HCT116 (cell line): ENCODE measurements at regions of chr7 and their contacts with region 1.

Region 1: GRCh38 chr7:44587843-44588711 is 6.0 kb upstream of the TMED4 start:
- DNase-seq: peak; percentile 56
- ATAC-seq: peak; percentile 83
- H3K4me3 ChIP-seq: no peak overlapping the region
- H3K27ac ChIP-seq: no peak overlapping the region
- H3K4me1 ChIP-seq: peaks cover 0 to 11% of the 10 kb centered on the region in 2 experiments; a peak in 2 of 4 replicates
- H3K27me3 ChIP-seq: no peaks in the 10 kb centered on the region
- CTCF ChIP-seq: peak; percentile 58 to 85 (median 79)
- POLR2A ChIP-seq: no peak
- RAD21 ChIP-seq: peak; percentile 98

Region 2: GRCh38 chr7:44678471-44679179 is 90.5 kb after region 1 on chr7:
- CTCF ChIA-PET with region 1: no interaction called
- POLR2A ChIA-PET with region 1: no interaction called
- RAD21 ChIA-PET with region 1: no interaction called
- intact Hi-C with region 1: loop called (anchors 5 kb)
- DNase-seq: no peak
- ATAC-seq: peak; percentile 29; the same call in 1 of the 2 replicates
- H3K4me3 ChIP-seq: no peak overlapping the region
- H3K27ac ChIP-seq: peak overlapping the region; percentile 16; the same call in 1 of the 2 replicates
- H3K4me1 ChIP-seq: peaks cover 5 to 24% of the 10 kb centered on the region in 2 experiments
- H3K27me3 ChIP-seq: no peaks in the 10 kb centered on the region
- CTCF ChIP-seq: no peak
- POLR2A ChIP-seq: no peak
- RAD21 ChIP-seq: no peak

Region 3: GRCh38 chr7:44748045-44748947 is 160.2 kb after region 1 on chr7 and contains the start of gene ZMIZ2:
- CTCF ChIA-PET with region 1: no interaction called
- POLR2A ChIA-PET with region 1: no interaction called
- RAD21 ChIA-PET with region 1: no interaction called
- intact Hi-C with region 1: loop called (anchors 1 kb)
- DNase-seq: peak; percentile 48
- ATAC-seq: peak; percentile 87
- H3K4me3 ChIP-seq: peak within 1 kb of the TSS; percentile 83 to 89
- H3K27ac ChIP-seq: peak within 1 kb of the TSS; percentile 92
- H3K4me1 ChIP-seq: peaks cover 18 to 28% of the 10 kb centered on the region in 2 experiments
- H3K27me3 ChIP-seq: no peaks in the 10 kb centered on the region
- CTCF ChIP-seq: no peak
- POLR2A ChIP-seq: no peak
- RAD21 ChIP-seq: no peak; the same call in 1 of the 2 replicates
- total RNA-seq, gene ZMIZ2: 91.3 TPM

Region 4: DNA sequence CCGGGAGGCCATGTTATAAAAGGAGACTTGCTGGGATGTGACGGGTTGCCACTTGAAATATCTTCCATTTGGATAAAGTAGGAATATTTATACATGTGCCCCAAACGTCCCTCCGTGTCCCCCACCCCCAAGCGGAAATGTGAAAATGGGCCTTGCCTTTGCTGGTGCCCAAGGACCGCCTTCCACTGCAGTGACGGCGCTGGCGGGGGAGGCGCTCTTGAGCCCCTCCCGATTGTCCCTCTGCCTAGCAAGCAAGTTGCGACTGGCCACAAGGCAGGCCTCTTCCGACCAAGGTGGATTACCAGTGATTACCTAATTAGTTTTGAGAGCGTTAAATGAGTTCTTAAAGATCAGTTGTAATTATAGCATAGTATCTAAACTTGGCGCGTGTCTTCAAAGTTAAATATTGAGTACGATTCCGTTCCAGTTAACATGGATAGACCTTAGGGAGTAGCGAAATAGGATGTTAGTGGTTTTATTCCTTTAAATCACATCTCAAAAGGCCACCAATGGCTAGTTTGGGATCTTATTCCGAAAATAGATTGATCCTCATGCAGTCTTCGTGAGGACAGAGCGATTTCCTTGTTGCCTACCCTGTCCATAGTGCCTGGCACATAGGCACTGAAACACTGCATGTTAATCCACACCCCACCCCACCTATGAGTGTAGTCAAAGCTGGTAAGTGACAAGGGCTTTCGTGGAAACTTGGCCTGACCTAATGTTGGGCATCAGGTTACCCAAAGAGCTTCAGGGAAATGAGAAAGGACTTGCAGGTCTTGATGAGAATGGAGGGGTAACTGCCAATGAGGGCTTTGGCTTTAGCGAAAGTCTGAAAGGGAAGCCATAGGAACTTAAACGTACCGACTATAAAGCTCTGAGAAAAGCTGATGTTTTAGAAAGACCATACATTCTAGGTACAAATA is 209.5 kb after region 1 on chr7:
- CTCF ChIA-PET with region 1: no interaction called
- POLR2A ChIA-PET with region 1: no interaction called
- RAD21 ChIA-PET with region 1: no interaction called
- intact Hi-C with region 1: loop called (anchors 2 kb)
- DNase-seq: peak; percentile 64
- ATAC-seq: peak; percentile 58
- H3K4me3 ChIP-seq: peak overlapping the region; percentile 80 to 96
- H3K27ac ChIP-seq: peak overlapping the region; percentile 99
- H3K4me1 ChIP-seq: peaks cover 9 to 41% of the 10 kb centered on the region in 2 experiments; a peak in 3 of 4 replicates
- H3K27me3 ChIP-seq: no peaks in the 10 kb centered on the region
- CTCF ChIP-seq: peak in 2 of 3 experiments; percentile 39 to 40; a peak in 3 of 6 replicates
- POLR2A ChIP-seq: no peak
- RAD21 ChIP-seq: no peak

Region 5: GRCh38 chr7:44847508-44847920 is 259.4 kb after region 1 on chr7:
- CTCF ChIA-PET with region 1: interaction called, 3 read pairs
- POLR2A ChIA-PET with region 1: no interaction called
- RAD21 ChIA-PET with region 1: no interaction called
- intact Hi-C with region 1: loop called (anchors 2 kb)
- DNase-seq: peak; percentile 51
- ATAC-seq: peak; percentile 76
- H3K4me3 ChIP-seq: peak overlapping the region; percentile 84 to 97
- H3K27ac ChIP-seq: peak overlapping the region; percentile 81
- H3K4me1 ChIP-seq: peaks cover 5 to 24% of the 10 kb centered on the region in 2 experiments; a peak in 3 of 4 replicates
- H3K27me3 ChIP-seq: no peaks in the 10 kb centered on the region
- CTCF ChIP-seq: peak; percentile 61 to 85 (median 76)
- POLR2A ChIP-seq: no peak
- RAD21 ChIP-seq: peak; percentile 90

Region 6: GRCh38 chr7:44921607-44922359 is 333.7 kb after region 1 on chr7:
- CTCF ChIA-PET with region 1: no interaction called
- POLR2A ChIA-PET with region 1: no interaction called
- RAD21 ChIA-PET with region 1: no interaction called
- intact Hi-C with region 1: loop called (anchors 1 kb)
- DNase-seq: peak; percentile 59
- ATAC-seq: peak; percentile 98
- H3K4me3 ChIP-seq: no peak overlapping the region
- H3K27ac ChIP-seq: no peak overlapping the region
- H3K4me1 ChIP-seq: peaks cover 0 to 6% of the 10 kb centered on the region in 2 experiments; a peak in 1 of 4 replicates
- H3K27me3 ChIP-seq: no peaks in the 10 kb centered on the region
- CTCF ChIP-seq: peak; percentile 65 to 89 (median 86)
- POLR2A ChIP-seq: no peak
- RAD21 ChIP-seq: peak; percentile 88

Region 7: GRCh38 chr7:45136106-45137060 is 548.3 kb after region 1 on chr7:
- CTCF ChIA-PET with region 1: interaction called, 3 read pairs
- POLR2A ChIA-PET with region 1: no interaction called
- RAD21 ChIA-PET with region 1: no interaction called
- intact Hi-C with region 1: loop called (anchors 2 kb)
- DNase-seq: peak; percentile 66
- ATAC-seq: peak; percentile 87
- H3K4me3 ChIP-seq: no peak overlapping the region
- H3K27ac ChIP-seq: no peak overlapping the region
- H3K4me1 ChIP-seq: no peaks in the 10 kb centered on the region
- H3K27me3 ChIP-seq: no peaks in the 10 kb centered on the region
- CTCF ChIP-seq: peak; percentile 76 to 91 (median 91)
- POLR2A ChIP-seq: no peak
- RAD21 ChIP-seq: peak; percentile 96

Region 8: GRCh38 chr7:45239486-45239885 is 651.4 kb after region 1 on chr7:
- CTCF ChIA-PET with region 1: no interaction called
- POLR2A ChIA-PET with region 1: no interaction called
- RAD21 ChIA-PET with region 1: no interaction called
- intact Hi-C with region 1: no loop called
- DNase-seq: no peak
- ATAC-seq: no peak
- H3K4me3 ChIP-seq: no peak overlapping the region
- H3K27ac ChIP-seq: no peak overlapping the region
- H3K4me1 ChIP-seq: peaks cover 2 to 13% of the 10 kb centered on the region in 2 experiments; a peak in 2 of 4 replicates
- H3K27me3 ChIP-seq: peaks cover 11% of the 10 kb centered on the region
- CTCF ChIP-seq: no peak
- POLR2A ChIP-seq: no peak
- RAD21 ChIP-seq: no peak